ENCODE measurements at regions of chr15 and their contacts with region 1.

Region 1: GRCh38 chr15:64209680-64210334 is 47.0 kb upstream of the PPIB start:
- DNase-seq: no peak

Region 2: DNA sequence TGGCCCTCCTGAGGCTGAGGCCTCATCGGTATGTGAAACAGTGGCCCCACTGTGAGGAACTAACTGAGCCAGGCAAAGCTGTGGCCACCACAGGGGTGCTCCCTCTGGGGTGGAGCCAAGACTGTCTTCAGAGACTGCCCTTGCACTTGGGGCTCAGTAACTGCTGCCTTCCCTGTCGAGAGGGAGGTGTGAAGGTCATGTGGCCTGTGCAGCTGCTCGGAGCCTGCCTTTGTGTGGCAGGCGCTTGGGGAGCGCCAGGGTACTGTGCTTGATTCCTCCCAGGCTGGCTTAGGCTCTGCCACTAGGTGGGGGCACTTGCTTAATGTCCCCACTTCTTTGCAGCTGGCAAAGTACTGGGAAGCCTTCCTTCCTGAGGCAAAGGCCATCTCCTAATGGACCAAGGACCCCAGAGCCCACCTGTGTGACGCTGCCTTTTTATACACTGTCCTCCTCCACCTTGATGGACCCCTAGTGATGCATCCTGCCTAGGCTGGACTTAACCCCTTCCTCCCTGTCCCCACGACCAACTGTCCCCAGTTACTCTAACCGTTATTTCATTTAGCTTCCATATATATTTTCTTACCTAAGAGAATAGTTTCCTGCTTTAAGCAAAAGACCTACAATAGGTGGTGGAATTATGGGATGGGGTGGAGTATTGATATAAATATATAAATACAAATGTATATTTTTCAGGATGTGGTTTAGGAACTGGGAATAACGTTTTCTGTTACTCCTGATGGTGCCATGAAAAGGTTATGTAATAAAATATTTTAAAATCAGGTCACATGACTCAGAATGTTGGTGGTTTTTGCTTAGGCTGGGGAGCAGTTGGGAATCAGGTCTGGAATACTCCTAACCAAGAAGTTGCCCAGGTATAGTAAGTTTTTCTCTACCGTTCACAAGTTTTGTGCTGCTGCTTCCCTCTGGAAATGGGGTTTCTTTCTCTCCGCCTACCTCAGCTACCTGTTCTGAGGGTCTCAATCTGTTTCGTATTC is 72.3 kb before region 1 on chr15:
- intact Hi-C with region 1: no loop called
- DNase-seq: no peak

Region 3: GRCh38 chr15:64369078-64369607 is 159.3 kb after region 1 on chr15:
- intact Hi-C with region 1: loop called in 1 of 2 experiments (anchors 10 kb)
- DNase-seq: no peak